Common myeloid progenitor, CD34-positive (primary cell): ENCODE measurements at regions of chr22 and their contacts with region 1.

Region 1: DNA sequence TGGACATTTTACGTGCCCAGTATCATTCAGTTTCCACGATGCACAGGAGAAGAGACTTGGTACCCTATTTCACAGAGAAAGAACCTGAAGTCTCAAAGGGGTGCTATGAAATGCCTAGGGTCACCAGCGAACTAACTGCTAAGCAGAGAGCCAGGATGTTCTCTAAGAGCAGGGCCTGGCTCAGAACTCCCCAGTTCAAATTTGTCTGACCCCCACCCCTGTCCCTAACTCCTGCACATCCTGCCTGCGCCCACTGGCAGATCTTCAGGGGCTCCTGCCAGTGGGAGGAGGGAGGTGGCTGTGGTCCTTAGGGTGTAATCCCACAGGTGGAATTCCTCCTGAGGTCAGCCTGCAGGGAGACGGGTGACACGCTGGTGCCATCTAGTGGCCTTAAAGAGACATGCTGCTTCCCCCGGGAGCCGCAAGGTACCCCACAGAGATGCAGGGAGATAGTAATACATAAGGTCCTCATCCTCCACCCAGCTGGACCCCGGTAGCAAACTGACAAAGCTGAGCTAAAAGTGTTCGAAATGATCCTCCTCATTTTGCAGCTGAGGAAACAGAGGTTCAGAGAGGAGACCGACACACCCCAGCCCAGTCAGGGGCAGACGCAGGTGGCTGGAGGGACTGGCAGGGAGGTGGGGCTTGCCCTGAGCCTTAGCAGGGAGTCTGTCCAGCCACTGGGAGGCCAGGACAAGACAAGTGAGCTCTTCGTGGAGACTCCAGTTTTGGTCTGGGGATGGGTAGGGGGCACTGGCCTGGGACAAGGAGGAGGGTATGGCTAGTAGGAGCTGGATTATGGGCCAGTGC is 34.1 kb downstream of the MB start:
- DNase-seq: peak; percentile 58 to 67 (median 65)
- H3K4me3 ChIP-seq: no peak overlapping the region
- H3K27ac ChIP-seq: no peak overlapping the region
- H3K4me1 ChIP-seq: no peaks in the 10 kb centered on the region
- H3K27me3 ChIP-seq: no peaks in the 10 kb centered on the region

Region 2: GRCh38 chr22:35430897-35431322 is 152.2 kb before region 1 on chr22:
- CTCF ChIA-PET with region 1: interaction called, 65 read pairs
- POLR2A ChIA-PET with region 1: no interaction called
- DNase-seq: peak; percentile 50 to 72 (median 64)
- H3K4me3 ChIP-seq: no peak overlapping the region
- H3K27ac ChIP-seq: no peak overlapping the region
- H3K4me1 ChIP-seq: no peaks in the 10 kb centered on the region
- H3K27me3 ChIP-seq: no peaks in the 10 kb centered on the region

Region 3: DNA sequence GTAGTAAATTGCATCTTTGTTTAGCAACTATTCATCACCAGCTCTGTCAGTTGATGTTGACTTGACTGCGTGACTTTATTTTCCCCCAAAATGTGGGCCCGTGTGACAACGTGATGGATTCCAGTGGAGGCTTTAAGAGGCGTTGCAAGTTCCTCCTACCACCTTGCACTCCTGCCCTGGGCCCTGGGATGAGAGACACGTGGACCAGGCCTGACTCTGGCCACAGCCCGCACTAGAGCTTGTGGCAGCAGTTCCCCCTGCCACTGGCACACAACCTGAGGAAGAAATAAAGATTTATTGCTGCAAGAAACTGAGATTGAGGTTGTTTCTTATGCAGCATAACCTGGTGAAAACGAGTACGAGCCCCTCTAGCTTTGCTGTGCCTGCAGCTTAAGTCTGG is 10.5 kb before region 1 on chr22:
- CTCF ChIA-PET with region 1: interaction called, 14 read pairs
- POLR2A ChIA-PET with region 1: no interaction called
- DNase-seq: no peak
- H3K4me3 ChIP-seq: no peak overlapping the region
- H3K27ac ChIP-seq: no peak overlapping the region
- H3K4me1 ChIP-seq: no peaks in the 10 kb centered on the region
- H3K27me3 ChIP-seq: peaks cover 0 to 4% (median 0%) of the 10 kb centered on the region in 5 experiments